ENCODE measurements at regions of chr7 and their contacts with region 1.

Region 1: GRCh38 chr7:42014625-42015546 is 222.1 kb downstream of the GLI3 start:
- DNase-seq: peak; percentile 79
- ATAC-seq: peak; percentile 83
- H3K4me3 ChIP-seq: no peak overlapping the region
- H3K27ac ChIP-seq: no peak overlapping the region; the same call in 1 of the 2 replicates
- H3K4me1 ChIP-seq: peaks cover 11% of the 10 kb centered on the region
- H3K27me3 ChIP-seq: no peaks in the 10 kb centered on the region
- CTCF ChIP-seq: peak; percentile 95

Region 2: GRCh38 chr7:41977151-41977651 is 37.7 kb before region 1 on chr7:
- CTCF ChIA-PET with region 1: no interaction called
- POLR2A ChIA-PET with region 1: no interaction called
- intact Hi-C with region 1: loop called (anchors 5 kb)
- DNase-seq: peak; percentile 67
- ATAC-seq: peak; percentile 67
- H3K4me3 ChIP-seq: no peak overlapping the region
- H3K27ac ChIP-seq: no peak overlapping the region
- H3K4me1 ChIP-seq: peaks cover 9% of the 10 kb centered on the region
- H3K27me3 ChIP-seq: no peaks in the 10 kb centered on the region
- CTCF ChIP-seq: peak; percentile 84

Region 3: GRCh38 chr7:42232275-42232674 is 217.4 kb after region 1 on chr7:
- CTCF ChIA-PET with region 1: no interaction called
- POLR2A ChIA-PET with region 1: no interaction called
- intact Hi-C with region 1: loop called (anchors 5 kb)
- DNase-seq: peak; percentile 67
- ATAC-seq: peak; percentile 9; the same call in 1 of the 2 replicates
- H3K4me3 ChIP-seq: peak overlapping the region; percentile 9; the same call in 1 of the 2 replicates
- H3K27ac ChIP-seq: no peak overlapping the region
- H3K4me1 ChIP-seq: peaks cover 43% of the 10 kb centered on the region
- H3K27me3 ChIP-seq: no peaks in the 10 kb centered on the region
- CTCF ChIP-seq: no peak

Region 4: DNA sequence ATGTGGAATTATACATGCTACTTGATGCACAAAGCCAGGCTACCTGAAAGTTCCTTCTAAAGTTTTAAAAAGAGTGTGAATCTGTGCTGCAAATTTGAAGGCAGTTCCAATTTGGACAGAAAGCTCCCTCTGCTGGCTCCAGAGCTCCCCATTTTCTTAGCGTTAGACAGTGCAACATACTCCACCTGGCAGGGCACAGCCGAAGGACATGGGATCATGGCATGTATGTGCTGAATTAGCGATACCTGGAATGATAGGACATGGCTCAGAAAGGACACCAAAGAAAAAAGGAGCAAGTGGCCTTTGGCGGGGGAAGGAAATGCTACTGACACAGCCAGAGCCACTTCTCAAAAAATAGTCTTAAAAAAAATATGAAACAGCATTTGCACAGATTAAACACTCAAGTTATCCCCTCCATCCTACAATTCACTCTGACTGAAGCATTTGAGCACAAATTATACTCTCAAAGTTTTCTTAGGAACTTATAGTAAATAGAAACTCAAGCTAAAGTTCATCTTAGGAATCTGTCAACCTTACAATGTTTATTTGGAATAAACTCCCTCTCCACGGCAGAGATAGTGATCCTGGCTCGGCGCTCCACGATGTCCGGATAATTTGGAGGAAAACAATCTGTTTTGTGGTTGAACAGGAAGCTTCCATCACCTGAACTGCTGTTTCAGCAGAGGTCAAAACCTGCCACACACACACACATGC is 817.0 kb after region 1 on chr7:
- CTCF ChIA-PET with region 1: no interaction called
- POLR2A ChIA-PET with region 1: no interaction called
- intact Hi-C with region 1: loop called (anchors 10 kb)
- DNase-seq: peak; percentile 70
- ATAC-seq: peak; percentile 97
- H3K4me3 ChIP-seq: peak overlapping the region; percentile 50
- H3K27ac ChIP-seq: no peak overlapping the region
- H3K4me1 ChIP-seq: peaks cover 17% of the 10 kb centered on the region; the same call in 1 of the 2 replicates
- H3K27me3 ChIP-seq: no peaks in the 10 kb centered on the region; the same call in 1 of the 2 replicates
- CTCF ChIP-seq: peak; percentile 87

Measured in PC-3 (cell line).